ENCODE measurements at regions of chr5 and their contacts with region 1.

Region 1: GRCh38 chr5:96614110-96614691 is 48.0 kb upstream of the CAST start:
- DNase-seq: peak; percentile 63
- ATAC-seq: peak; percentile 70
- H3K4me3 Mint-ChIP-seq: no peak overlapping the region
- H3K27ac Mint-ChIP-seq: no peak overlapping the region
- H3K4me1 Mint-ChIP-seq: peaks cover 7% of the 10 kb centered on the region
- H3K27me3 Mint-ChIP-seq: peaks cover 37% of the 10 kb centered on the region

Region 2: DNA sequence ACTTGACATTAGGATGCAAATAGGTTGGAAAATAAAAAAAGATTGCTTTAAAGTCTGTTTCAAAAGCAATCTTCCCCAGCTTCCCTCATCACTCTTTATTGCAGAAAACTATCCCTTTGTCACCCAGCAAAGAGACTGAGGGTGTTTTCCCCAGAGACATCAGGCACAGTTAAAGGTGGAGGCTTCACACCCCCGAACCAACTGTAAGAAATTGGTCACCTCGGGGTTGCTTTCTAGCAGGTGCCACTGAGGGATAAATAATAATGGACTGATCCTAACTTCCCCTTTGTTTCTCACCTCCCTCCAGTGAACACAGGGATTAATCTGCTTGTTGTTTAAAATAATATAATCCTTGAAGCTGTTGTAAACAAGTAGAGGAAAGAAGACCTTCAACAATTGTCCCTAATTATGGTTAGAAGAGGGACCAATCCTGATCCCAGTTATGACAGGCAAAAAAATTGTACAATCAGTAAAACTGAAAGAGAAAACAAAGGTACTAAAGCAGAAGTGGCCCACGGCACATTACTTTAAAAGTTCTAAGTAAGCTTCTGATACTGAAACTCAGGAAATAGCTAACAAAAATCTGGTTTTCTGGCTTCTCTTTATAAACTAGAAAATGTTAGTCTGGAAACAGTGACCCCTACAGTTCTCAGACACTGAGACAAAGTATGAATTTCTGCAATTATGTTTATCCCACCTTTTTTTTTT is 174.6 kb before region 1 on chr5:
- CTCF ChIA-PET with region 1: no interaction called
- DNase-seq: no peak
- ATAC-seq: no peak
- H3K4me3 Mint-ChIP-seq: no peak overlapping the region
- H3K27ac Mint-ChIP-seq: no peak overlapping the region
- H3K4me1 Mint-ChIP-seq: peaks cover 6% of the 10 kb centered on the region
- H3K27me3 Mint-ChIP-seq: peaks cover 70% of the 10 kb centered on the region

Region 3: DNA sequence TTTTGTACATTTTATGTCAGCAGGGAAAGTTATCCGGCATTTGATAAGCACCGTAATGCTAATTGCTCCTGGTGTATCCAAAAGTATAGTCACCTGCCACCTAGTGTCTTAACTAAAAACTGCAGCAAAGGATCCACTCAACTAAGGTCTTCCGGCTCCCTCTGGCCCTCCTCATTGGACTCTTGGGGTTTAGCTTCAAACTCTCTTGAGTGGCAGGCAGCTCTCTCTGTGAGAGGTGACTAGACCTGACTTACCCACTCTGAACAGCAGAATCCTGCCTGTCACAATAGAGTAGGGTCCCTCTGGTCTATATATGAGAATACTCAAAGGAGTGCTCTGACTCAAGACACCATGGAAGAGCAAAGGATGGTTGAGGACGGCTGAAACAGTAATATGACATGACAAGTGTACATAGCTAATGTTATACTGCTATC is 12.4 kb before region 1 on chr5:
- CTCF ChIA-PET with region 1: interaction called, 18 read pairs
- DNase-seq: peak; percentile 64
- ATAC-seq: peak; percentile 76
- H3K4me3 Mint-ChIP-seq: no peak overlapping the region
- H3K27ac Mint-ChIP-seq: no peak overlapping the region
- H3K4me1 Mint-ChIP-seq: peaks cover 2% of the 10 kb centered on the region
- H3K27me3 Mint-ChIP-seq: peaks cover 28% of the 10 kb centered on the region

Region 4: GRCh38 chr5:96624636-96625035 is 10.4 kb after region 1 on chr5:
- CTCF ChIA-PET with region 1: interaction called, 12 read pairs
- DNase-seq: no peak
- ATAC-seq: no peak
- H3K4me3 Mint-ChIP-seq: no peak overlapping the region
- H3K27ac Mint-ChIP-seq: no peak overlapping the region
- H3K4me1 Mint-ChIP-seq: peaks cover 8% of the 10 kb centered on the region
- H3K27me3 Mint-ChIP-seq: peaks cover 6% of the 10 kb centered on the region

Region 5: GRCh38 chr5:96687812-96688453 is 73.7 kb after region 1 on chr5:
- CTCF ChIA-PET with region 1: interaction called, 33 read pairs
- DNase-seq: no peak
- ATAC-seq: peak; percentile 86
- H3K4me3 Mint-ChIP-seq: no peak overlapping the region
- H3K27ac Mint-ChIP-seq: no peak overlapping the region
- H3K4me1 Mint-ChIP-seq: peaks cover 22% of the 10 kb centered on the region
- H3K27me3 Mint-ChIP-seq: no peaks in the 10 kb centered on the region

Region 6: DNA sequence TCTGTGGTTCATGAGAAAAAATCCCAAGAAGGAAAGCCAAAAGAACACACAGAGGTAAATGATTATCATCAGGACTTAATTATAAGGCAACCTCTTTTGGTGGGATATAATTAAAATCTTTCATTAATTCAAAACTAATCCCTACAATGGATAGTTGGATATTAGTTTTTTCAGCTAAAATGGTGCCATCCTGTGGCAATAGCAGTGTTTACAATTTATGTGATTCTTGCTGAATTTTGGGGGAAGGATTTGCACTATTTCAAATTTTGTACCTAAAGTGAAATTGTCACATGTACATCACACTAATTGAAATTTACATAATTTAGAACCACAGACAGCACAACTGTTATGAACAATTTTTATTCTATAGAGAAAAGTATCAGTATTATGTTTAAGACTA is 115.0 kb after region 1 on chr5:
- CTCF ChIA-PET with region 1: interaction called, 16 read pairs
- DNase-seq: no peak
- ATAC-seq: no peak
- H3K4me3 Mint-ChIP-seq: no peak overlapping the region
- H3K27ac Mint-ChIP-seq: no peak overlapping the region
- H3K4me1 Mint-ChIP-seq: peaks cover 4% of the 10 kb centered on the region
- H3K27me3 Mint-ChIP-seq: no peaks in the 10 kb centered on the region